ENCODE measurements at regions of chr1 and their contacts with region 1.

Region 1: GRCh38 chr1:84620720-84621313 is 46.6 kb upstream of the CTBS start:
- DNase-seq: peak; percentile 47 to 93
- H3K4me3 ChIP-seq: peak overlapping the region; percentile 37
- CTCF ChIP-seq: peak in 1 of 3 donors; percentile 66
- POLR2A ChIP-seq: no peak

Region 2: GRCh38 chr1:84402060-84402459 is 218.8 kb before region 1 on chr1:
- intact Hi-C with region 1: no loop called
- DNase-seq: peak in 1 of 2 donors; percentile 38
- H3K4me3 ChIP-seq: no peak overlapping the region
- CTCF ChIP-seq: no peak
- POLR2A ChIP-seq: no peak

Region 3: DNA sequence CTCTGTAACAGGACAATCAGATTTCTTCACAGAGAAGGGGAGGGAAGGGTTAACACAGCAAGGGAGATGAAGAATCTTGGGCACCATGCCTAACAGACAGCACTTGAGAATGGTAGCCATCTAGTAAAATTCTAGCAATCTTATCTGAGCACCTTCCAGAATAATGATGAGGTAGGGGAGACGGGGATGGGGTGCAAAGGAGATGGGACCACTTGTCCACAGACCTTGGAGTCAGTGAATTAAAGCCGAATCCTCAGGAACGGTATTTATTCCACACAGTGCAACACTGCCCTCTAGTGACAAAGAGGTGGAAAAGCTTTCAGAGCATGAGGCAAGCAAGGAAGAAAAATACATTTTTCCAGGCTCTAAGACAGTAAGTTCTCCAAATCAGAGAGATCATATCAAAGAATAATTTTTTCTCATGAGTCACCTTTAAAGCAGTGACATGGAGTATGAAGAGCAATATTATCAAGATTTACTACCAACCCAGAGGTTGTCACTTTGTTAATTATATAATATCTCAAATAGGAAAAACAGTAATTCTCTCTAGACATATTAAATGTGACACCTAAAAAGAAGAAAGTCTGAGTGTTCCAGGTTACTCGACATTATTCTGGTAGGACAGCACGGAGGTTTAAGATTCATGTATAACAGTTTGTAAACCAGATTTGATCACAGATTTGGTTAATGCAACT is 315.4 kb after region 1 on chr1:
- intact Hi-C with region 1: loop called (anchors 5 kb)
- DNase-seq: peak in 1 of 2 donors; percentile 21
- H3K4me3 ChIP-seq: no peak overlapping the region
- CTCF ChIP-seq: peak in 1 of 3 donors; percentile 68
- POLR2A ChIP-seq: no peak

Measured in lower leg skin (tissue), 4 donors.